ENCODE measurements at regions of chr2 and their contacts with region 1.

Region 1: GRCh38 chr2:98731041-98731893 is at the start of gene MGAT4A:
- DNase-seq: peak; percentile 87
- ATAC-seq: peak; percentile 80
- H3K4me3 Mint-ChIP-seq: peak within 1 kb of the TSS; percentile 88
- H3K27ac Mint-ChIP-seq: peak within 1 kb of the TSS; percentile 93
- H3K4me1 Mint-ChIP-seq: peaks cover 67% of the 10 kb centered on the region
- H3K27me3 Mint-ChIP-seq: no peaks in the 10 kb centered on the region
- total RNA-seq, gene MGAT4A: 49.4 to 67.5 TPM

Region 2: DNA sequence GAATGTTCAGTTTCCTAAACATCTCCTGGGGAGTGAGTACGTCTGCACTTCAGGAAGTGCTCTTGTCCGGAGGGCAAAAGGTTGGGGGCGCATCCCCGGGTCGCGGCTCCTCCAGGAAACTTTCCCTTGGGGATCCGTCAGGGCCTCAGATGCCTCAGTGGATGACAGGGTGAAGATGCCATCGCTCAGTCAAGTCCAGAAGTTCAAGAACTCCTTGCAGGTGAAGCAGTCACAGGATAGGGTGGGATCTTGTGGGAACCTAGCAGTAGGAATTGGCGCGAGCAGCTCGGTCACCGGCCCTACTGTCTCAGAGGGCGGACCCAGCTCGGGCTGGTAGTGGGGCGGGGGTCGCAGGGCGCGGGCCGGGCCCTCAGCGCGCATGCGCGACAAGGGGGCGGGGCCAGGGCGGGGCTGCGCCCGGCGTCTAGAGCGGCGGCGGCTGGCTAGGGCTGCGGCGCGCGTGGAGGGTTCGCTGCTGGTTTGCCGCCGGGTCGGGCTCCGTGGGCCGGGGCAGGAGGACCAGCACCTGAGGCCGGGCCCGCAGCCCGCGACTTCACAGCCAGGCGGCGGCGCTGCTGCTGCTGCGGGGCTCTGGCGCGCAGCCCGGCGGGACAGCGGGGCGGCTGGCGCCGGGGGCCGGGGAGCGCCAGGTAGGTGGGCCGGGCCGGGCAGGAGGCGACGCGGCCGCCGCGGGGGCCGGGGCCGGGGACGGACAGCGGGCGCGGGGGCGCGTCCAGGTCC is 286.7 kb before region 1 on chr2 and contains the start of gene INPP4A:
- CTCF ChIA-PET with region 1: no interaction called
- POLR2A ChIA-PET with region 1: no interaction called
- intact Hi-C with region 1: loop called in 1 of 2 experiments (anchors 5 kb)
- DNase-seq: peak; percentile 87
- ATAC-seq: peak; percentile 74
- H3K4me3 Mint-ChIP-seq: peak within 1 kb of the TSS; percentile 83
- H3K27ac Mint-ChIP-seq: peak within 1 kb of the TSS; percentile 94
- H3K4me1 Mint-ChIP-seq: peaks cover 42% of the 10 kb centered on the region
- H3K27me3 Mint-ChIP-seq: no peaks in the 10 kb centered on the region
- total RNA-seq, gene INPP4A: 29.1 to 33.0 TPM

Region 3: GRCh38 chr2:98455494-98455976 is 275.7 kb before region 1 on chr2:
- CTCF ChIA-PET with region 1: no interaction called
- POLR2A ChIA-PET with region 1: no interaction called
- intact Hi-C with region 1: no loop called
- DNase-seq: peak; percentile 59
- ATAC-seq: peak; percentile 51
- H3K4me3 Mint-ChIP-seq: peak overlapping the region; percentile 55
- H3K27ac Mint-ChIP-seq: peak overlapping the region; percentile 88
- H3K4me1 Mint-ChIP-seq: peaks cover 96% of the 10 kb centered on the region
- H3K27me3 Mint-ChIP-seq: no peaks in the 10 kb centered on the region

Region 4: DNA sequence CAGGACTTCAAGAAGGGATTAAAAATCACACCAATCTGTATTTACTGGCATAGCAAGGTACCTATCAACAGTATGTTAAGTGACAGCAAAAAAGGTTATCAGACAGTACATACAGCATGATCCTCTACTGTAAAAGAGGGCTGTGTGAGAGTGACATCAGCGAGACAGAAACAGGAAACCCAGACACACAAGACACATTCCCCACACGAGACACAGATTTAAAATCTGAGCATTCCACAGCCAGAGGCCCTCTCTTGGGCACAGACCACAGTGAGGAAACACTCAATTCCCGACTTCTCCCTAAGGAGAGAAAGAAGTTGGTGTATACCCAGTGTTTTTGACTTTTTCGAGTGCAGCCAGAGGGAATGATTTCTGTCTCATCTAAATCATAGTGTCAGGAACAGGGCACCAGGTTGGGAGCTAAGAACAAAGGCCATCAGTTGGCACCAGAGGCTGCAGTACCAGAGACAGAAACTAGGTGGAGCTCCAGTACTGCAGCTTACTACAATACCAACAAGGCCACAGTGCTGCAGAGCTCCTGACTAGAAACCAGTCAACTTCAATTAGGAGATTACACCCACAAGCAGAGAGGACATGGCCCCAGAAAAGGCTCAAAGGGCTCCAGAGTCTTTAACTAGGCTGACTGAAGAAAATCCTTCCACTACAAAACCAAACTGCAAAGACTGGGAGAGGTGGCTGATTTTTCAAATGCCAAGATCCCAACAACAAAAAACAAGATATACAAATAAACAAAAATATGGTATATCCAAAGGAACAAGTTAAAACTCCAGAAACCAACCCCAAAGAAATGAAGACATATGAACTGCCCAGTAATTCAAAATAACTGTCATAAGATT is 81.9 kb before region 1 on chr2:
- CTCF ChIA-PET with region 1: interaction called, 14 read pairs
- POLR2A ChIA-PET with region 1: interaction called, 4 read pairs
- intact Hi-C with region 1: loop called in 1 of 2 experiments (anchors 2 kb)
- DNase-seq: peak; percentile 88
- ATAC-seq: peak; percentile 93
- H3K4me3 Mint-ChIP-seq: no peak overlapping the region
- H3K27ac Mint-ChIP-seq: peak overlapping the region; percentile 73
- H3K4me1 Mint-ChIP-seq: peaks cover 58% of the 10 kb centered on the region
- H3K27me3 Mint-ChIP-seq: no peaks in the 10 kb centered on the region

Region 5: DNA sequence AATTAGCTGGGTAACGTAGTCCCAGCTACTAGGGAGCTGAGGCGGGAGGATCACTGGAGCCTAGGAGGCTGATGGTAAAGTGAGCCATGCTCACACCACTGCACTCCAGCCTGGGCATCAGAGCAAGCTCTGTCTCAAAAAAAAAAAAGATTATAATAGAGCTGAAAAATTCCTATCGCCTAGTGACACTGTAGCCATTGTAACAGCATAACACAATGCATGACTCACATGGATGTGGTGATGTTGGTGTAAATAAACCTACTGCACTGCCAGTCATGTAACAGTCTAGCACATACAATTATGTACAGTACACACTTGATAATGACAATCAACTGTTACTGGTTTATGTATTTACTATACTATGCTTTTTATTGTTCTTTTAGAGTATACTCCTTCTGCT is 40.0 kb before region 1 on chr2:
- CTCF ChIA-PET with region 1: interaction called, 4 read pairs
- POLR2A ChIA-PET with region 1: no interaction called
- intact Hi-C with region 1: loop called (anchors 2 kb)
- DNase-seq: no peak
- ATAC-seq: peak; percentile 43
- H3K4me3 Mint-ChIP-seq: peak overlapping the region; percentile 20
- H3K27ac Mint-ChIP-seq: peak overlapping the region; percentile 96
- H3K4me1 Mint-ChIP-seq: peaks cover 86% of the 10 kb centered on the region
- H3K27me3 Mint-ChIP-seq: no peaks in the 10 kb centered on the region

Region 6: DNA sequence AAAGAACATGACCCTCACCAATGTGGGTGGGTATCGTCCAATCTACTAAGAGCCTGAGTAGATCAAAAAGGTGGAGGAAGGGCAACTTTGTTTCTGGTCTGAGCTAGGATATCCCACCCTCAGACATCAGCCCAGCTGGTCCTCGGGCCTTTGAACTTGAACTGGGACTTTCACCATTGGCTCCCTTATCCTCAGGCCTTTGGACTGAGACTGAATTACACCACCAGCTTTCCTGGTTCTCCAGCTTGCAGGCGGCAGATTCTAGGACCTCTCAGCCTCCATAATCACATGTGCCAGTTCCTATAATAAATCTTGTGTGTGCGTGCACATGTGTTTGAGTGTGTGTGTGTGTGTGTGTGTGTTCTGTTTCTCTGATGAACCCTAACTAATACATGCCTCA is 11.0 kb before region 1 on chr2:
- CTCF ChIA-PET with region 1: interaction called, 19 read pairs
- POLR2A ChIA-PET with region 1: interaction called, 4 read pairs
- intact Hi-C with region 1: loop called in 1 of 2 experiments (anchors 2 kb)
- DNase-seq: no peak
- ATAC-seq: no peak
- H3K4me3 Mint-ChIP-seq: no peak overlapping the region
- H3K27ac Mint-ChIP-seq: peak overlapping the region; percentile 28
- H3K4me1 Mint-ChIP-seq: peaks cover 81% of the 10 kb centered on the region
- H3K27me3 Mint-ChIP-seq: no peaks in the 10 kb centered on the region

Region 7: GRCh38 chr2:98795891-98796676 is 64.8 kb after region 1 on chr2:
- CTCF ChIA-PET with region 1: no interaction called
- POLR2A ChIA-PET with region 1: no interaction called
- intact Hi-C with region 1: no loop called
- DNase-seq: no peak
- ATAC-seq: no peak
- H3K4me3 Mint-ChIP-seq: no peak overlapping the region
- H3K27ac Mint-ChIP-seq: no peak overlapping the region
- H3K4me1 Mint-ChIP-seq: no peaks in the 10 kb centered on the region
- H3K27me3 Mint-ChIP-seq: no peaks in the 10 kb centered on the region

Region 8: DNA sequence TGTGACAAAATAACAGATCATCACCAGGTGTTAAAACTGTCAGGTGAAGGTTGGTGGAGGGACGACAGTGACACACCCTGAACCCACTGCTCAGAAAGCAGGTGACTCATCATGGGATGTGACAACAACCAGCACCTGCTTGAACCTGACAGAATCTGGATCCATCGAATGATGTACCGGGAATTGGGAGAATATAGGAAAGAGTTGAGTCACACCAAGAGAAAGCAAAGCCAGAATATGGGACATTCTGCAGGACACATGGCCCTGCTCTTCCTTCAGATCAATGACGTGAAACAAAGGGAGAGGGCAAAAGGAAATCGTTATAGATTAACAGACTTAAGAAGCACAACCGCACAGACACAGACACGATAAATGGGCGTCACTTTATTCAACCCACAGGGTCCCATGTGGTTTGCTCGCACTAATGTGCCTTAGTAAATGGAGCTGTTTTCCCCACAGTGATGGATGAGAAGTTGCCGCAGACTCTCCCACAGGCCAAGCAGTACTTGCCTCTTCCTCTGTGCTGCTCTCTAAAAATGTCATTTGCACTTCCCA is 104.6 kb after region 1 on chr2:
- CTCF ChIA-PET with region 1: no interaction called
- POLR2A ChIA-PET with region 1: interaction called, 6 read pairs
- intact Hi-C with region 1: loop called (anchors 1 to 5 kb)
- DNase-seq: peak; percentile 57
- ATAC-seq: peak; percentile 78
- H3K4me3 Mint-ChIP-seq: no peak overlapping the region
- H3K27ac Mint-ChIP-seq: peak overlapping the region; percentile 79
- H3K4me1 Mint-ChIP-seq: peaks cover 29% of the 10 kb centered on the region
- H3K27me3 Mint-ChIP-seq: no peaks in the 10 kb centered on the region

Region 9: GRCh38 chr2:98893911-98894321 is 162.6 kb after region 1 on chr2:
- CTCF ChIA-PET with region 1: no interaction called
- POLR2A ChIA-PET with region 1: no interaction called
- intact Hi-C with region 1: no loop called
- DNase-seq: no peak
- ATAC-seq: no peak
- H3K4me3 Mint-ChIP-seq: no peak overlapping the region
- H3K27ac Mint-ChIP-seq: no peak overlapping the region
- H3K4me1 Mint-ChIP-seq: no peaks in the 10 kb centered on the region
- H3K27me3 Mint-ChIP-seq: no peaks in the 10 kb centered on the region